Cardiac septum (tissue), 1 donor: ENCODE measurements at regions of chr15 and their contacts with region 1.

Region 1: GRCh38 chr15:52018693-52019387 is at the start of gene MAPK6:
- DNase-seq: peak; percentile 97
- total RNA-seq, gene MAPK6: 20.1 TPM

Region 2: GRCh38 chr15:51692154-51692553 is 326.7 kb before region 1 on chr15:
- intact Hi-C with region 1: no loop called
- DNase-seq: no peak

Region 3: DNA sequence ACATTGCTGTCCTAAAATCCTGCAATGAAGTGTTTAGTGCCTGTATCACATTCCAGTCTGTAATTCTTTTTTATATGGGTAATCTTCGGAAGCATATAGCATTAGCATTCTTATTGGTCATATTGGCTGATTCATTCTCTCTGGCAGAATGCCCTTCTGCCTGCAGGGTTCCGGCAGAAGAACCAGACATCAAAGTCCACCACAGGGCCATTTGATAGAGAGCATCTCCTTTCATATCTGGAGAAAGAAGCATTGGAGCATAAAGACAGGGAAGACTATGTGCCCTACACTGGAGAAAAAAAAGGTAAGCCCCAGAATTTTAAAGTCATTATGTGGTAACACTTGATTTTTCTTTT is 149.8 kb before region 1 on chr15:
- intact Hi-C with region 1: no loop called
- DNase-seq: no peak

Region 4: DNA sequence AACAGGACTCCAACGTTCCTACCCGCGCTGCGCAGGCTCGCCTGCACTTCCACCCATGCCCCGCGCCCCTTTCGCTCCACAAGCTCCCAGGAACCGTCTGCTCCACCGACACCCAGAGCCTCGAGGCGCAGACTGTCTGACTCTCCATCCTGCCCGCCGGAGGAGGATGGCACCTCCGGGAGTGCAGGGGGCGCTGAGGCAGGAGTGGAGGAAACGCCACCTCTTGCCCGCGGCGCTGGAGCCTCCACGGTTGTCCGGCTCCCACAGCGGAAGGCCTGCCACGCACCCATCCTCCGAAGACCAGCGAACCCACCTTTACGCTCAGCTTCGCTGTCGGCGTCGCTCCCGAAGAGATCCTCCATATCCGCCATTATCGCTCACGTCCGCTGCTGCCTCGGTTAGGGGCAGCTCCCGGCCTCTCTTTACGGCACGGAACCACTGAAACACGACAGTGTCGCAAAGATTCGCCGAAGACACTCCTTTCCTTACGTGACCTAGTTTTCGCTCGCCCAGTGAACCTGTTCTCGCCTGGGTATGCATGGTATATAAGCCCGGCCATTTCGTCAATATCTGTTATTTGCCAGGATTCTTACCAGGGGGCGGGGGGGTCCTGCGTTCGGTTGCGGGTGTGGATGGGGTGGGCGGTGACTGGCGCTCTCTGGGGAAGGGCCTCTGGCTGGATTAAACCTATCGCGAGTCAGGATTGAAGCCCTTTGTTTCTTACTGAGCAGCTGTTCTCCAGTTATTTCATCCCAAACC is 47.3 kb before region 1 on chr15 and contains the start of gene LEO1:
- intact Hi-C with region 1: loop called (anchors 1 kb)
- DNase-seq: peak; percentile 95
- total RNA-seq, gene LEO1: 7.0 TPM

Region 5: DNA sequence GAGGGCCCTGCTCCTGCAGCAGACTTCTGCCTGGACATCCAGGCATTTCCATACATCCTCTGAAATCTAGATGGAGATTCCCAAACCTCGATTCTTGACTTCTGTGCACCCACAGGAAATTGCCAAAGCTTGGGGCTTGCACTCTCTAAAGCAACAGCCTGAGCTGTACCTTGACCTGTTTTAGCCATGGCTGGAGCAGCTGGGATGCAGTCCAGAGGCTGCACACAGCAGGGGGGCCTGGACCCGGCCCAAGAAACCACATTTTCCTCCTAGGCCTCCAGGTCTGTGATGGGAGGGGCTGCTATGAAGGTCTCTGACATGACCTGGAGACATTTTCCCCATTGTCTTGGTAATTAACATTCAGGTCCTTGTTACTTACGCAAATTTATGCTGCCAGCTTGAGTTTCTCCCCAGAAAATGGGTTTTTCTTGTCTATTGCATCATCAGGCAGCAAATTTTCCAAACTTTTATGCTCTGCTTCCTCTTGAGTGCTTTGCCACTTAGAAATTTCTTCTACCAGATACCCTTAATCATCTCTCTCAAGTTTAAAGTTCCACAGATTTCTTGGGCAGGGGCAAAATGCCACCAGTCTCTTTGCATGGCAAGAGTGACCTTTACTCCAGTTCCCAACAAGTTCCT is 521.7 kb after region 1 on chr15:
- intact Hi-C with region 1: no loop called
- DNase-seq: no peak